Activated CD8-positive, alpha-beta T cell treated with anti-CD3 and anti-CD28 coated beads, Interleukin-2, amount 10 ng/mL, durations not matched to agents 7 days and 5 days (primary cell): ENCODE measurements at regions of chr1 and their contacts with region 1.

Region 1: DNA sequence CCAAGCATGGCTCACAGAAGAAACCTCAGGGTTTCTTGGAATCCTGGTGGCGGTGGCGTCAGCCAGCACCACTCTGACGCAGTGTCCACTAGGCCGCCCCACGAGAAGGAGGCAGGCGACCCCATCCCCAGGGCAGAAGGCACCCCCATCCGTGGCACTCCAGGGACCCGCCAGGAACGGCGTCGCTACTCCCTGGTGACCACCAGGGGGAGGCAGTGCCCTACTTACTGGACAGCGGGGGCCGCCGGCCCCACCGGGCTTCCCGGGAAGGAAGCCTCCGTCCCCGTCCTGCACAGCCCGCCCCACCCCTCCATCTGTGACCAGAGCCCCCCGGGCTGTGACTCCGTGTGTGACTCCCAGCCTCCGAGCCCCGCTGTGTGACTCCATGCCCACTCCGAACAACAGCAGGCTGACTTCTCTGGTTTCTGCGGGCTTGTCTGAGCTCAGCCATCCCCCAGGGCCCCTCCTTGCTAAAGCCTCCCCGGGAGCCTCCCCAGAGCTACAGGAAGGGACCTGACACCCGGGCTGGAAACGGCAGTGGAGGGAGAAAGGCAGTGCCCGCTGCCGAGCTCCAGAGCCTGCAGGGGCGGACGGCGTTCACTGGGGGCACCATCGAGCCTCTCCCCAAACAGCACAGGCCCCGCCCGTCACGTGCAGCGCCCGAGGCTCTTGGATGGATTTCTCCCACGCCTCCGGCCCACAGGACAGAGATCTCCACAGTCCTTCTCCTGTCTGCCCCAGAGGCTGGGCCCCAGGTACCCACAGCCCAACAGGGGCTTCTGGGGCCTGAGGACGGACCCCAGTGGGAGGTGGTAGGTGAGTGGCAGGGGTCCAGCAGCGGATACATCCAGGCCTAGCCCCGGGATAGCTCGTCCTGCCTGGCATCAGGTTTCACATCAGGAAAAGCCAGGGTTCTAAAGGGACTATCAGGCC is 21.1 kb downstream of the KIF17 start:
- DNase-seq: peak; percentile 81
- ATAC-seq: peak; percentile 95
- H3K4me3 Mint-ChIP-seq: peak overlapping the region; percentile 86
- H3K27ac Mint-ChIP-seq: peak overlapping the region; percentile 77
- H3K4me1 Mint-ChIP-seq: peaks cover 18% of the 10 kb centered on the region
- H3K27me3 Mint-ChIP-seq: peaks cover 3% of the 10 kb centered on the region

Region 2: GRCh38 chr1:20212685-20213331 is 483.9 kb before region 1 on chr1:
- CTCF ChIA-PET with region 1: no interaction called
- POLR2A ChIA-PET with region 1: no interaction called
- DNase-seq: peak; percentile 53
- ATAC-seq: peak; percentile 73
- H3K4me3 Mint-ChIP-seq: no peak overlapping the region
- H3K27ac Mint-ChIP-seq: no peak overlapping the region
- H3K4me1 Mint-ChIP-seq: peaks cover 6% of the 10 kb centered on the region
- H3K27me3 Mint-ChIP-seq: peaks cover 30% of the 10 kb centered on the region

Region 3: GRCh38 chr1:20706841-20707240 is 10.2 kb after region 1 on chr1:
- CTCF ChIA-PET with region 1: interaction called, 26 read pairs
- POLR2A ChIA-PET with region 1: no interaction called
- DNase-seq: no peak
- ATAC-seq: no peak
- H3K4me3 Mint-ChIP-seq: no peak overlapping the region
- H3K27ac Mint-ChIP-seq: no peak overlapping the region
- H3K4me1 Mint-ChIP-seq: no peaks in the 10 kb centered on the region
- H3K27me3 Mint-ChIP-seq: no peaks in the 10 kb centered on the region

Region 4: GRCh38 chr1:20717452-20718342 is 21.0 kb after region 1 on chr1 and contains the start of gene KIF17:
- CTCF ChIA-PET with region 1: interaction called, 11 read pairs
- POLR2A ChIA-PET with region 1: no interaction called
- DNase-seq: peak; percentile 61
- ATAC-seq: peak; percentile 65
- H3K4me3 Mint-ChIP-seq: peak within 1 kb of the TSS; percentile 52
- H3K27ac Mint-ChIP-seq: no peak within 1 kb of the TSS
- H3K4me1 Mint-ChIP-seq: peaks cover 12% of the 10 kb centered on the region
- H3K27me3 Mint-ChIP-seq: peaks cover 37% of the 10 kb centered on the region
- total RNA-seq, gene KIF17: not detected

Region 5: DNA sequence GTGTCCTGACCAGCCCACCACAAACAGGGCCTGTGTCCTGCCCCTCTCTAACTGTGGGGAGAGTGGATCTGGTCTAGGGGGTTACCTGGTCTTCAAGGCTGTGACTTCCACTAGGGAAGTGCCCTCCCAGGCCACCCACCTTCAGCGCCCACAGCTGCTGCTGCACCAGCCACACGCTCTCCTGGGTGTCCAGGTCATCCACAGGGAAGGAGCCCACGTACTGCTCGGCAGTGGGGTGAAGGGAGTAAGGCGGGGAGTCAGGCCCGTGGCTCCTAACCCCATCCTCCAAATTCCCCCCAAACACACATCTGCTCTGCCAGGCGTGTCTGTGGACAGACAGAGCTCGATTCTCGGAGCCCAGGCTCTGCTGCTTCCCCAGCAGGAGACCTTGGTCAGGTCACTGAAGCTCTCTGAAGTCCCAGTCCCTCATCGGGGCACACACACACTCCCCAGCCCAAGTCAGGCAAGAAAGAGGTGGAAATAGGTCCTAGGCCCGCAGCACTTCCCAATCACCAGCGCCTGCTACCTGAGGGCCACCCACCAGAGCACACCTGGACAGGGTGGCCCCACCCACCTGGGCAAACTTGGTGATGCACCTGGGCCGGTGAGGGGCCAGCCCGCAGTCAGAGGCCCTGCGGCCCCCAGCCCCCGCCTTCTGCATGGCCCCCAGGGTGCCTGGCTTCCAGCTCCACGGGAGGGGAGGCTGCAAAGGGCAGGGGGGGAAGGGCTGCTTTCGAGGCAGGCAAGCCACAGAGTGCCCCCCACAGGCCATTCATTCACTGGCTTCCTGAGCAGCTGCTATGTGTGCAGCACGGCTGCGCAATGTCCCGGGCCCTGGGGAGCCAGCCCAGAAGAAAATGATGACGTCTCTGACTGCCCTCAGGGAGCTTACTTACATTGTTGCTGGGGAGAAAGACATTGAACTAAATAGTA is 31.0 kb after region 1 on chr1:
- CTCF ChIA-PET with region 1: interaction called, 15 read pairs
- POLR2A ChIA-PET with region 1: interaction called, 3 read pairs
- DNase-seq: no peak
- ATAC-seq: no peak
- H3K4me3 Mint-ChIP-seq: no peak overlapping the region
- H3K27ac Mint-ChIP-seq: no peak overlapping the region
- H3K4me1 Mint-ChIP-seq: peaks cover 10% of the 10 kb centered on the region
- H3K27me3 Mint-ChIP-seq: peaks cover 31% of the 10 kb centered on the region

Region 6: GRCh38 chr1:20739225-20739624 is 42.6 kb after region 1 on chr1:
- CTCF ChIA-PET with region 1: interaction called, 12 read pairs
- POLR2A ChIA-PET with region 1: no interaction called
- DNase-seq: no peak
- ATAC-seq: no peak
- H3K4me3 Mint-ChIP-seq: no peak overlapping the region
- H3K27ac Mint-ChIP-seq: no peak overlapping the region
- H3K4me1 Mint-ChIP-seq: no peaks in the 10 kb centered on the region
- H3K27me3 Mint-ChIP-seq: no peaks in the 10 kb centered on the region

Region 7: GRCh38 chr1:21189906-21190500 is 493.3 kb after region 1 on chr1:
- CTCF ChIA-PET with region 1: interaction called, 72 read pairs
- POLR2A ChIA-PET with region 1: no interaction called
- DNase-seq: no peak
- ATAC-seq: no peak
- H3K4me3 Mint-ChIP-seq: no peak overlapping the region
- H3K27ac Mint-ChIP-seq: no peak overlapping the region
- H3K4me1 Mint-ChIP-seq: peaks cover under 1% of the 10 kb centered on the region
- H3K27me3 Mint-ChIP-seq: peaks cover 17% of the 10 kb centered on the region